ENCODE measurements at regions of chr4 and their contacts with region 1.

Region 1: GRCh38 chr4:143085224-143085623 is 99.5 kb upstream of the USP38 start:
- DNase-seq: peak; percentile 14
- H3K4me3 ChIP-seq: no peak overlapping the region
- H3K27ac ChIP-seq: no peak overlapping the region
- H3K4me1 ChIP-seq: no peaks in the 10 kb centered on the region
- H3K27me3 ChIP-seq: no peaks in the 10 kb centered on the region
- CTCF ChIP-seq: peak; percentile 43

Region 2: DNA sequence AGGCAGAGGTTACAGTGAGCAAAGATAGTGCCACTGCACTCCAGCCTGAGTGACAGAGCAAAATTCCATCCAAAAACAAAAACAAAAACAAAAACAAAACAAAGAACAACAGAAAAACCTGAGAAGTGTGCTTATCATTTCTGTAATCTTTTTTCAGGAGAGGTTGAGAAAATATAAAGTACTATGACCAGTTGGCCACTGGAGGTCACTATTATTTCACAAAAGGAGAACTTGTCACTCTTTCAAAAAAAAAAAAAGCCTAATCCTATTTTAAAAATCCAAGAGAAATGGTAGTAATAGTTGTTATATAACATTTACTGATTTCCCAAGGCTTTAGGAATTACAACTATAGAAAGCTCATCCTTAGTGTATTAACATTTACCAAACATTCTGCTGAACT is 1927.0 kb before region 1 on chr4:
- CTCF ChIA-PET with region 1: no interaction called
- POLR2A ChIA-PET with region 1: no interaction called
- intact Hi-C with region 1: loop called (anchors 10 kb)
- DNase-seq: peak; percentile 41
- H3K4me3 ChIP-seq: no peak overlapping the region
- H3K27ac ChIP-seq: no peak overlapping the region
- H3K4me1 ChIP-seq: no peaks in the 10 kb centered on the region
- H3K27me3 ChIP-seq: no peaks in the 10 kb centered on the region
- CTCF ChIP-seq: peak; percentile 57

Region 3: GRCh38 chr4:143254491-143255226 is 169.4 kb after region 1 on chr4:
- CTCF ChIA-PET with region 1: no interaction called
- POLR2A ChIA-PET with region 1: no interaction called
- intact Hi-C with region 1: no loop called
- DNase-seq: no peak
- H3K4me3 ChIP-seq: no peak overlapping the region
- H3K27ac ChIP-seq: no peak overlapping the region
- H3K4me1 ChIP-seq: no peaks in the 10 kb centered on the region
- H3K27me3 ChIP-seq: no peaks in the 10 kb centered on the region
- CTCF ChIP-seq: no peak

Measured in A673 (cell line).